IMR-90 (cell line): ENCODE measurements at regions of chr7 and their contacts with region 1.

Region 1: GRCh38 chr7:16564909-16565426 is 38.3 kb downstream of the LRRC72 start:
- DNase-seq: peak; percentile 55
- ATAC-seq: peak; percentile 59
- H3K4me3 ChIP-seq: no peak overlapping the region
- H3K27ac ChIP-seq: no peak overlapping the region
- H3K4me1 ChIP-seq: no peaks in the 10 kb centered on the region
- H3K27me3 ChIP-seq: no peaks in the 10 kb centered on the region
- CTCF ChIP-seq: peak; percentile 86
- POLR2A ChIP-seq: peak; percentile 46; the same call in 1 of the 2 replicates
- RAD21 ChIP-seq: peak; percentile 90

Region 2: GRCh38 chr7:15305002-15305600 is 1259.9 kb before region 1 on chr7:
- CTCF ChIA-PET with region 1: interaction called, 3 read pairs
- POLR2A ChIA-PET with region 1: no interaction called
- dilution Hi-C with region 1: no loop called
- in situ Hi-C with region 1: loop called (anchors 25 kb)
- intact Hi-C with region 1: loop called (anchors 10 kb)
- DNase-seq: peak; percentile 39
- ATAC-seq: no peak
- H3K4me3 ChIP-seq: no peak overlapping the region
- H3K27ac ChIP-seq: no peak overlapping the region
- H3K4me1 ChIP-seq: no peaks in the 10 kb centered on the region
- H3K27me3 ChIP-seq: no peaks in the 10 kb centered on the region
- CTCF ChIP-seq: peak; percentile 75
- POLR2A ChIP-seq: no peak
- RAD21 ChIP-seq: peak; percentile 74

Region 3: DNA sequence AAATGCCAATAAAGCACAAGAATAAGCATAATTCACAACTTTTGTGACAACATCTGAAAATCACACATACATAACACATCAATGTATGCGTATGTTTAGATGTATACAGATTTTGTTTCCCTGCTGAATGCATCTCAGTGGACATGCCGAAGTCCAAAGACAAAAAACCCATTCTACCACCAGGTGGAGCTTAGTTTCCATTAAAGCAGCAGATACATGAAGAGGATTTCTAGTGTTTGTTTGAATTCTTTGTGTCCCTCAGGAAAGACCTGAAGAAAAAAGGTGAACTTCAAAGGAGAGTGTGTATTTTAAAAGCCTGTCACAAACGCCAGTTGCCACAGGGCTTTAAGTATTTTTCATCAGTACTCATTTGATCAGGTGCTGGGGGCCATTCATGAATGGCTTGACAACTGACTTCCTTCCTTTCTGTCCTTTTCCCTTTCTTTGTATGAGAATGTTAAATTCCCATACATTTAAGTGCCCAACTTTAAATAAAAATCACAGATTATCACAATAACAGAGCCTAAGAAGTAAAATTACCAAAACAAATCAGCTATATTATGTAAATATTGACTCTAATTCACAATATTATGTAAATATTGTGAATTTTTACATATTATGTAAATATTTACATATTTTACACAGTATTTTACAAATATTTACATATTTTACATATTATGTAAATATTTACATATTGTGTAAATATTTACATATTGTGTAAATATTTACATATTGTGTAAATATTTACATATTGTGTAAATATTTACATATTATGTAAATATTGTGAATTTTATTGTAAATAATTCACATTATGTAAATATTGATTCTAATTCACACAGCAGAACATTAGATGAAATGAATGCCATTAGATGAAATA is 486.7 kb before region 1 on chr7:
- CTCF ChIA-PET with region 1: interaction called, 10 read pairs
- POLR2A ChIA-PET with region 1: no interaction called
- dilution Hi-C with region 1: no loop called
- in situ Hi-C with region 1: loop called (anchors 5 kb)
- intact Hi-C with region 1: loop called (anchors 1 kb)
- DNase-seq: peak; percentile 64
- ATAC-seq: peak; percentile 82
- H3K4me3 ChIP-seq: no peak overlapping the region
- H3K27ac ChIP-seq: no peak overlapping the region
- H3K4me1 ChIP-seq: no peaks in the 10 kb centered on the region
- H3K27me3 ChIP-seq: no peaks in the 10 kb centered on the region
- CTCF ChIP-seq: peak; percentile 70
- POLR2A ChIP-seq: no peak
- RAD21 ChIP-seq: peak; percentile 69

Region 4: DNA sequence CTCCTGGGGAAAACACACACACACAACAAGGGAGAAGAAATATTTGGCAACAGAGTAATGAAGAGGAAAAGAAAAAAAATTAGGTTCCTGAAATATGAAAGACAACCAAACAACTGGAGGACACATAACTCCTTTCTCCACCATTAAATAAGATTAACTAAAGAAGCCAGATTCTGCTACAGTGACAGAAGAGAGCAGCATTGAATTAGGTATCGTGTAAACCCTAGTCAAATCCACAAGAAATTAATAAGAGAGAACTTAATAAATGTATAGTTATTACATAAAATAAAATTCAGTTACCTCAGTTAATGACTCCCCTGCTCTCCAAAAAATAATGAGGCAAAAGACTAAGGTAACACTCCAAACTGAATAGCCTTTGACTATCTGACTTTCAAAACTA is 450.3 kb before region 1 on chr7:
- CTCF ChIA-PET with region 1: interaction called, 5 read pairs
- POLR2A ChIA-PET with region 1: no interaction called
- dilution Hi-C with region 1: no loop called
- in situ Hi-C with region 1: loop called (anchors 5 kb)
- intact Hi-C with region 1: loop called (anchors 1 kb)
- DNase-seq: peak; percentile 59
- ATAC-seq: peak; percentile 70; the same call in 1 of the 2 replicates
- H3K4me3 ChIP-seq: no peak overlapping the region
- H3K27ac ChIP-seq: no peak overlapping the region
- H3K4me1 ChIP-seq: no peaks in the 10 kb centered on the region
- H3K27me3 ChIP-seq: no peaks in the 10 kb centered on the region
- CTCF ChIP-seq: peak; percentile 66
- POLR2A ChIP-seq: no peak
- RAD21 ChIP-seq: peak; percentile 76

Region 5: DNA sequence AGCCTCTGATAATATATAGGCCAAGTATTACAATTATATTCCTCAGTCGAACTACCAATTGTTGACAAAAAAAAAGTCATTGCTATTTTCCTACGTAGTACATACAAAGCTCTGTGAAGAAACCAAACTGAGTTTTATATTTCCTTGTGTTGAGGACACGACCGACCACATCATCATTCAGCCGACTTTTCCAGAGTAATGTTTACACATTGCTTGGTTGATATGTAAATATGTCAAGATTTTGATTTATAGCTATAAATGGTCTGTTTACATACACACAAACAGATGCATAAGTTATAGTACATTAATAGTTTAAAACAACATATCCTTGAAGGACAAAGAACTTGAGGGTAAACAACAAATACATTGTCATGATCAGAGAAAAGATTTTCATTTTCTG is 265.1 kb before region 1 on chr7:
- CTCF ChIA-PET with region 1: no interaction called
- POLR2A ChIA-PET with region 1: no interaction called
- dilution Hi-C with region 1: no loop called
- in situ Hi-C with region 1: no loop called
- intact Hi-C with region 1: no loop called
- DNase-seq: peak; percentile 3
- ATAC-seq: peak; percentile 54
- H3K4me3 ChIP-seq: no peak overlapping the region
- H3K27ac ChIP-seq: no peak overlapping the region
- H3K4me1 ChIP-seq: no peaks in the 10 kb centered on the region
- H3K27me3 ChIP-seq: no peaks in the 10 kb centered on the region
- CTCF ChIP-seq: no peak
- POLR2A ChIP-seq: no peak
- RAD21 ChIP-seq: no peak

Region 6: DNA sequence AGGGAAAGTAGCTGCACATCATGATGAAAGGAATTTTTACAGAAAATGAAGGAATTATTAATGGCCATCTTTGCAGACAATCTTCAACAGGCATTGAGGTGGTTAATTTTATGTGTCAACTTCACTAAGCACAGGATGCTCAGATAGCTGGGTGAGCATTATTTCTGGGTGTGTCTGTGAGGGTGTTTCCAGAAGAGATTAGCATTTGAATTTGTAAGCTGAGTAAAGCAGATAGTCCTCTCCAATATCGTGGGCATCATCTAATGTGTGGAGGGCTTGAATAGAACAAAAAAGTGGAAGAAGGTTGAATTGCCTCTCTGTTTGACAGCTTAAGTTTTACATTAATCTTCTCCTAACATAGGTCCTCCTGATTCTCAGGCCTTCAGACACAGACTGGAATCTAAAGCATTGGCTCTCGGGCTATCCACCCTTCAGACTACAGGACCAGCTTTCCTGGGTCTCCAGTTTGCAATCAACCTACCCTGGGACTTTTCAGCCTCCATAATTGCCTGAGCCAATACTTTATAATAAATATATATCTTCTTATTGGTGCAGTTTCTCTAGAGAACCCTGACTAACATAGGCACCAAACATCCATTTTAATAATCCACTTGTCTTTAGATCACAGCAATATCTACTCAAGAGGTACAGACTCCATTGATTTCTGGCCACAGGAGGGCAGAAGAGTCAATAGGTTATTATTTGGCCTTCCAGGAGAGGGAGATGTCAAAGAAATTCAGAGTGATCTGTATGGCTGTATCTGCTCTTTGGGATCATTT is 133.1 kb before region 1 on chr7:
- CTCF ChIA-PET with region 1: interaction called, 12 read pairs
- POLR2A ChIA-PET with region 1: no interaction called
- dilution Hi-C with region 1: no loop called
- in situ Hi-C with region 1: no loop called
- intact Hi-C with region 1: loop called (anchors 1 kb)
- DNase-seq: no peak
- ATAC-seq: peak; percentile 47; the same call in 1 of the 2 replicates
- H3K4me3 ChIP-seq: no peak overlapping the region
- H3K27ac ChIP-seq: no peak overlapping the region
- H3K4me1 ChIP-seq: peaks cover 4% of the 10 kb centered on the region; the same call in 1 of the 2 replicates
- H3K27me3 ChIP-seq: no peaks in the 10 kb centered on the region
- CTCF ChIP-seq: peak; percentile 36
- POLR2A ChIP-seq: no peak
- RAD21 ChIP-seq: peak; percentile 32

Region 7: DNA sequence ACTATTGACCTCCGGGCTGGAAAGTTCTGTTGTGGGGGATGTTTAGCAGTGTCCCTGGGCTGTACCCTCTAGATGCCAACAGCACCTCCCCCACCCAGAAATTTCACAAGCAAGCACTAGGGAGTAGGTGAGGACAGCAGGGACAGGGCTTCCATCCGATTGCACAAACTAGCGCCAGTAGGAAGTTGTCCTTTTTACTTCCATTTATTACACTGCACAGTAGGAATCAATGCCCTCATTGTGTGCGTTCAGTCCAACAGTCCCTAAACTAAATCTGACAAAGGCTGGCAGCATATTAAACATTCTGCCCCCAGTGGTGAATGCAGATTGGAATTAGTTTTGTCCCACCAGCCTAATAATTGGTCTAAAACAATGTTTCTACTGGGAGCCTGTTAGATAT is 93.0 kb before region 1 on chr7:
- CTCF ChIA-PET with region 1: no interaction called
- POLR2A ChIA-PET with region 1: no interaction called
- dilution Hi-C with region 1: no loop called
- in situ Hi-C with region 1: no loop called
- intact Hi-C with region 1: no loop called
- DNase-seq: no peak
- ATAC-seq: no peak
- H3K4me3 ChIP-seq: no peak overlapping the region
- H3K27ac ChIP-seq: no peak overlapping the region
- H3K4me1 ChIP-seq: no peaks in the 10 kb centered on the region
- H3K27me3 ChIP-seq: no peaks in the 10 kb centered on the region
- CTCF ChIP-seq: no peak
- POLR2A ChIP-seq: no peak
- RAD21 ChIP-seq: no peak

Region 8: DNA sequence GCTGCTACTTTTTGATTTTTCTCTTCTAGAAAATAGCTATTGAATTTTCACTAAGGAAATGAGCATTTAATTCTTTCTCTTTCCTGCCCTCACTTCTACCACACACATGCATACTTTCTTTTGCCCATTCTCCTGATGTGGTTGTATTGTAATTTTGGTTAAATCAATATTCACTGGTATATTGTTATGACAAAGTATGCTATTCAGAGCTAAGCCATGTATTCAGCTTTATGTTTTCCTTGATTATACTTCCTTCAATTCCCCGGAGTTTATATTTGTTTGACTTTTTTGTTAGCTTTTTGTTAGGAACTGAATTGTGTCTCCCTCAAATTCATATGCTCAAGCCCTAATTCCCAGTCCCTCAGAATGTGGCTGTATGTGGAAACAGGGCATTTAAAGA is 14.3 kb before region 1 on chr7:
- CTCF ChIA-PET with region 1: interaction called, 10 read pairs
- POLR2A ChIA-PET with region 1: no interaction called
- dilution Hi-C with region 1: no loop called
- in situ Hi-C with region 1: no loop called
- intact Hi-C with region 1: no loop called
- DNase-seq: no peak
- ATAC-seq: no peak
- H3K4me3 ChIP-seq: no peak overlapping the region
- H3K27ac ChIP-seq: no peak overlapping the region
- H3K4me1 ChIP-seq: no peaks in the 10 kb centered on the region
- H3K27me3 ChIP-seq: peaks cover 2% of the 10 kb centered on the region
- CTCF ChIP-seq: no peak
- POLR2A ChIP-seq: no peak
- RAD21 ChIP-seq: no peak